Thyroid gland (tissue), 4 donors: ENCODE measurements at regions of chr5 and their contacts with region 1.

Region 1: DNA sequence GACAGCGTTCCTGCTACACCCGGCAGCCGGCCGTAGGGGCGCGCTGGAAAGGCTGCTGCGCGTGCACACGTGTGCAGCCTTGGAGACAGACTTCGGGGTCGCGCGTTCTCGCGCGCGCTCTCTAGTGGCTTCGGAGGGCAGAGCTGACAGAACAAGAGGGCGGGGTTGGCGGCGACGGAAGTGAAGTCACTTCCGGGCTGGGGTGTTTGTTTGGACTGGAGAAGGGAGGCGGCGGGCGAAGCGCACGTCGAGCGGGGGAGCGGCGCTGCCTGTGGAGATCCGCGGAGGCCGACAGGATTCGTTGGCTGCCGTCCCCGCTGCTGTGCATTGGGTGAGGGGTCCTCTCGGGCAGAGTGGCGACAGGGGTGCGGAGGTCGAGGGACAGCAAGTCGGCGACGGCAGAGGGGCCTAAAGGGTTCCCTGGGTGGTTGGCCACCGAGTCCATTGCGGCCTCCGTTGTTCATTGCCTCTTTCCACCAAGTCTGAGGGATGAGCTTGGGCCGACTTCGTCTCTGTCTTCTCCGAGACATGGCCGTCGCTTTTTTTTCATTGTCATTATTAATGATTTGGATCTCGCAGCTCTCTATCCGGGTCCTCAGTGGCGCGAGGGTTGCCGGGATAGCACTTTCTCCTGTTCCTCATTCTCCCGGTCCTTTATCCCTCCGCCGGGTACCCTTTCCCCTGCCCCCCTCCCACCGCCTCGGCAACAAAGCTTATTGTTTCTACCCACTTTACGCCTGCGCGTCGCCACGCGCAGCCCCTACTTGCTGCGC is at the start of gene PAIP2:
- DNase-seq: peak; percentile 98 to 99
- H3K4me3 ChIP-seq: peak within 1 kb of the TSS; percentile 21 to 98 (median 80)
- H3K27ac ChIP-seq: peak within 1 kb of the TSS; percentile 82 to 96 (median 95)
- H3K4me1 ChIP-seq: peaks cover 14 to 26% of the 10 kb centered on the region in 2 donors
- H3K27me3 ChIP-seq: no peaks in the 10 kb centered on the region
- CTCF ChIP-seq: peak; percentile 45 to 75 (median 54)
- POLR2A ChIP-seq: peak; percentile 81 to 98
- total RNA-seq, gene PAIP2: 92.7 to 136 (median 117) TPM

Region 2: GRCh38 chr5:139137702-139138101 is 204.1 kb before region 1 on chr5:
- intact Hi-C with region 1: no loop called
- DNase-seq: no peak
- H3K4me3 ChIP-seq: no peak overlapping the region
- H3K27ac ChIP-seq: peak overlapping the region in 1 of 3 donors; percentile 81
- H3K4me1 ChIP-seq: peaks cover 58 to 83% of the 10 kb centered on the region in 2 donors
- H3K27me3 ChIP-seq: no peaks in the 10 kb centered on the region
- CTCF ChIP-seq: no peak
- POLR2A ChIP-seq: no peak

Region 3: DNA sequence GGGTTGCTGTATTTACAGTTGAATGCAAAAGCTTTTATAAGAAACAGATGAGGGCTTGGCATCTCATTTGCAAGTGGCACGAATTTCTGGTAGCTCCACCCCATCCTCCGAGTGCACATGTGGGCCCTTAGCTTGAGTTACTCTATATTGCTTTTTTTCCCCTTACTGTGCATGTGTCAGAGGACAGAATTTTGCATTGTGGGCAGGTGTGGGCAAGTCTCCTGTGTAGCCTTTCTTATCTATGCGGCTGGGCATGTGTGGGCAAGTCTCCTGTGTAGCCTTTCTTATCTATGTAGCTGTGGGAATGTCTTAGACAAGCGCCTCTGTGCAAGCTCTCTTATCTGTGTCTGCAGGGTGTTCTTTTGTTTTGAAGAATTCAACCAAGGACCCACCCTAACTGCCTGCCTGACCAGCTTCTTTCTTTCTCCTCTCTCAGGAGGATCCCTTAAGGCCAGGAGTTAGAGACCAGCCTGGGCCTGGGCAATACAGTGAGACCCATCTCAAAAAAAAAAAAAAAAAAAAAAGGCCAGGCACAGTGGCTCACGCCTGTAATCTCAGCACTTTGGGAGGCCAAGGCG is 109.6 kb before region 1 on chr5:
- intact Hi-C with region 1: no loop called
- DNase-seq: no peak
- H3K4me3 ChIP-seq: no peak overlapping the region
- H3K27ac ChIP-seq: no peak overlapping the region
- H3K4me1 ChIP-seq: peaks cover 0 to 7% of the 10 kb centered on the region in 2 donors
- H3K27me3 ChIP-seq: no peaks in the 10 kb centered on the region
- CTCF ChIP-seq: no peak
- POLR2A ChIP-seq: no peak

Region 4: DNA sequence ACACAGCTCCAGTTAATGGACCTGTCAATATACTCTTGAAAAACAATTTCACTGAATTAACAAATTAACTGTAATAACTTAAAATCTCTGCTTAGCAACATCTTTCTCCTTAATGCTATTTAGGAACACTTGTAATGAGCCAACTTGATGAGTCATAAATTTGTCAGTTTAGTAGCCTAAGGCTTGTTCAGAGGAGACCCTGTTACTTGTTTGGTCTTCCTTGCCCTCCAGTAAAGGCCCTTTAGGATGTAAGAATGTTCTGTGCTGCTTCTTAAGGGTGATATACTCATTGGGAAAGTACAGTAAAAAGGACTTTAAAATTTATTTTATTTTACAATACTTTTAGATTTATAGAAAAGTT is 59.7 kb before region 1 on chr5:
- intact Hi-C with region 1: no loop called
- DNase-seq: no peak
- H3K4me3 ChIP-seq: no peak overlapping the region
- H3K27ac ChIP-seq: no peak overlapping the region
- H3K4me1 ChIP-seq: no peaks in the 10 kb centered on the region
- H3K27me3 ChIP-seq: no peaks in the 10 kb centered on the region
- CTCF ChIP-seq: no peak
- POLR2A ChIP-seq: no peak

Region 5: DNA sequence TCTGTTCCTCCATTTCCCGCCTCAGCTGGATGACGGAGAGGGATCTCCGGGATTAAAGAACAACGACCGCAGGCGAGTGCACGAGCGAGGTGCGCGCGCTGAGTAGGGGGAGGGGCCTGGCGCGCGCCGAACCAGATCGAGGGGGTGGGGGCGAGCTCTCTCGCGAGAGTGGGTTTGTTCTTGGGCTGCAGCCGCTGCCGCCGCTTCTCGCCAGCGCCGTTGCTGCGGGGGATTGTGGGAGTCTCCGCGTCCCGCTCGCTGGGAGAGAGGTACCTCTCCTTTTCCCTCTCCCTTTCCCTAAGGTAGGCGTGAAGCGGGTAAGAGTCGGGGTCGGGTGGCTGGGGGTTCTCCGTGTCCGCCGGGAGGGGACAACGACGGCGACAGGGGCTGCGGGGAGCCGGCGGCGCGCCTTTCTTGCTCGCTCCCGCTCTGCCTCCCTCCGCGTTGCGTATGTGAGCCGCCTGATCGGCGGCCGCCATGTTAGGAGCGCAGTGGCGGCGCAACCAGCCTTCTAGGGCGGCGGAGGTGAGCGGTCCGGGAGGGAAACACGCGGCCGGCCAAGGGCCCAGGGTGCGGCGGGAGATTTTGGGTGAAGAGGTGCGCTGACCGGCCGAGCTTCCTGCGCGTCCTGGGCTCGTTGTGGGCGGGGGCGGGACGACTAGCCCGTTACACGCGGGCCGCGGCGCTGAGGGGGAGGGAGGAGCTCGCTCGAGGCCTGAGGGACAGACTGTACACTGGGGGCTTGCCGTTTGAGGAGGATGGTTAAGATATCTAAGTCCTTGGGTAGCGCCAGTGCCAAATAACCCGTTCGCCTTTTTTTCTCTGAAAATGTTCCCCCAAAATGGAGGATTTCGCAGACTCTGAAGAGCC is 48.1 kb before region 1 on chr5 and contains the start of gene MATR3:
- intact Hi-C with region 1: loop called (anchors 5 kb)
- DNase-seq: peak; percentile 95 to 96
- H3K4me3 ChIP-seq: peak within 1 kb of the TSS; percentile 59 to 94 (median 65)
- H3K27ac ChIP-seq: peak within 1 kb of the TSS; percentile 99 to 100 (median 100)
- H3K4me1 ChIP-seq: peaks cover 36 to 37% of the 10 kb centered on the region in 2 donors
- H3K27me3 ChIP-seq: no peaks in the 10 kb centered on the region
- CTCF ChIP-seq: peak in 1 of 6 experiments; percentile 5
- POLR2A ChIP-seq: peak; percentile 89 to 97
- total RNA-seq, gene MATR3: 343 to 366 (median 354) TPM